MCF 10A (cell line): ENCODE measurements at regions of chr1 and their contacts with region 1.

Region 1: DNA sequence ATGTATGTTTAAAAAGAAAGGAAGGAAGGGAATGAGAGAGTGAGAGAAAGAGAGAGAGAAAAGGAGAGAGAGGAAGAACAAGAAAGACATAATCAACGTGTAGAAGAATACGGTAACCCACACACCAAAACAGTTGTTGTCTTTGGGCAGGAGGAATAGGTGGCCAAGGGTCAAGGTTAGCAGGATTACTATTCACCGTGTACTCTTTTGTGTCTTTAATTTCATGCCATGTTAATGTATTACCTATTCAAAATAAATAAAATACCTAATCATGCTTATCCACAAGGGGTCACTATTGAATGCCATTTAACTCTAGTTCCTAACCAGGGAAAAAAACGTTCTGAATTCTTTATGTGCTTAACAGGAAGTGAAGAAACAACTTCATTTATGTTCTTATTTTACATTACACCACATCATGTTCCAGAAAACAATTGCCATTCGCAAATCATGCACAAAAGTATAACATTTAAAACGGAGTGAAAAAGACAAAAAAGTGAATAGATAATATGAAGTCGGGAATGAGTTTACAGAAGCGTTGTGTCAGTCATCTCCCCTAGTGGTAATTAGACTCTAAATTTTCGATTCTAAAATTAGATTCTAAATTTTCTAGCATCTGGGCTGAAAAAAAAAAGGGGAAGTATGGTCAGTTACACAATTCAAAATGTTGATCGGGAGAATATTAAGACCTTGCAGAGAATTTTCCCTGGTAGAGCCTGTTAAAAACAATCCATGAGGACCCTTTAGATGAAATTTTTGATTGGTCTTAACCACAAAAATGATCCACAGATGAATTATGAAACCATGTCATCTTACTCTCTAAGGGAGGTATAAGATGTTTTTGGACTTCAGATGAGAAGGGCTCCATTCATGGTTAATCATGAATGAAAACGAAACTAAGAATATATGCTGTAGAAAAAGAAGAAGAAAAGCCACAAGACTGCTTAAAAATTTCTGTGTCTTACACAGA is 700 bp upstream of the KMO start:
- DNase-seq: peak; percentile 91
- H3K4me3 Mint-ChIP-seq: peak overlapping the region; percentile 74
- H3K27ac Mint-ChIP-seq: peak overlapping the region; percentile 80
- H3K4me1 Mint-ChIP-seq: peaks cover 21% of the 10 kb centered on the region
- H3K27me3 Mint-ChIP-seq: no peaks in the 10 kb centered on the region
- CTCF ChIP-seq: peak; percentile 77

Region 2: DNA sequence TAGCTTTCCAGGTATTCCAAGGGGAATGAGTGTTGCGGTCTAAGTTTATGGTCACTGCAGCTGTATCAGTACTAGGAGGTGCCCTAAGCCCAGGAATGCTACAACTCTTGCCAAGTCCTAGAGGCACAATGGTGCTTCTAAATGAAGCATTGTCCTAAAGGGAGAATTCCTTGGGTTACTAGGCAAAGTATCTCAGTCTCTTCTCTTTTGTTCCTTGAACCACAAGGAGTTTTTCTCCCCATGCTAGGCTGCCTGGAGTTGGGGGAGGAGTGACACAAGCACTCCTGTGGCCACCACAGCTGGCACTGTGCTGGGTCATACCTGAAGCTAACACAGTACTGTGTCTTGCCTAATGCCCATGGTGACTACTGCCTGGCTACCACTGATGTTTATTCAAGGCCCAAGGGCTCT is 51.4 kb after region 1 on chr1:
- CTCF ChIA-PET with region 1: interaction called, 3 read pairs
- POLR2A ChIA-PET with region 1: interaction called, 10 read pairs
- intact Hi-C with region 1: no loop called
- DNase-seq: peak; percentile 75
- H3K4me3 Mint-ChIP-seq: no peak overlapping the region
- H3K27ac Mint-ChIP-seq: peak overlapping the region; percentile 73
- H3K4me1 Mint-ChIP-seq: peaks cover 8% of the 10 kb centered on the region
- H3K27me3 Mint-ChIP-seq: no peaks in the 10 kb centered on the region
- CTCF ChIP-seq: no peak

Region 3: DNA sequence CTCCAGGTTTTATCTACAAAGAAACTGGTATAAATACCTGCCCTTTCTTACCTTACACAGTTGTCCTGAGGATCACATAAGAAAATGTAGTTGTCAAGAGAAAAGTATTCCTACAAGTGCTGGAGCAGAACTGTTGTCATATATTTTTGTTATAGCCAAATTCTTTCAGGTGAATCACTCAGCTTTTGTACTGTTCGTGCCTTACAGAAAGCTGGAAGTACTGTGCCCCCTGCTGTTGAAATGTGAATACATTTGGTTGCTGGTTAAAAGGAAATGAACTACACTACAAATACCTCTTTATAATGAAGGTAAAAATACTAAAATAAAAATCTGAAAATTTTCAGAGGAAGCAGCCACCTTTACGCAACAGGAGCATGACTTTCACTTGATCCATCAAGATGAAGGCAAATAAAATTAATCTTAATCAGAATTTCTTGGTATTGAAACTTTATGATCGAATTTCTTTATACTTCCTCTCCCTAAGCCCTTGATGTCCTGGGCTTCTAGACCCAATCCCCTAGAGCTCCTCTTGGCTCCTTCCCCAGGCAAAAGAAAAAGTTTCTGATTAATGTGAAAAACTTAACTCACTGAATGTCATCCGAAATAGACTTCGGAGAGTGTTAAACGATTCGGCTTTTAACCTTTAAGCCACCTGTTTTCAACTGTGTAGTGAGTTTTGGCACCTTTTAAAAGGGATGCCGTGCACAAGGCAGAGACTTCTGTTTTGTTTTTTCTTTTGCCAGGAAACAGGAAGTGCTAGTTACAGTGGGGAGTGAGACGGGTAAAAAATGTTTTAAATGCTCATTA is 96.2 kb after region 1 on chr1:
- CTCF ChIA-PET with region 1: interaction called, 22 read pairs
- POLR2A ChIA-PET with region 1: interaction called, 14 read pairs
- intact Hi-C with region 1: loop called (anchors 1 kb)
- DNase-seq: peak; percentile 92
- H3K4me3 Mint-ChIP-seq: no peak overlapping the region
- H3K27ac Mint-ChIP-seq: peak overlapping the region; percentile 52
- H3K4me1 Mint-ChIP-seq: peaks cover 58% of the 10 kb centered on the region
- H3K27me3 Mint-ChIP-seq: no peaks in the 10 kb centered on the region
- CTCF ChIP-seq: peak; percentile 80

Region 4: DNA sequence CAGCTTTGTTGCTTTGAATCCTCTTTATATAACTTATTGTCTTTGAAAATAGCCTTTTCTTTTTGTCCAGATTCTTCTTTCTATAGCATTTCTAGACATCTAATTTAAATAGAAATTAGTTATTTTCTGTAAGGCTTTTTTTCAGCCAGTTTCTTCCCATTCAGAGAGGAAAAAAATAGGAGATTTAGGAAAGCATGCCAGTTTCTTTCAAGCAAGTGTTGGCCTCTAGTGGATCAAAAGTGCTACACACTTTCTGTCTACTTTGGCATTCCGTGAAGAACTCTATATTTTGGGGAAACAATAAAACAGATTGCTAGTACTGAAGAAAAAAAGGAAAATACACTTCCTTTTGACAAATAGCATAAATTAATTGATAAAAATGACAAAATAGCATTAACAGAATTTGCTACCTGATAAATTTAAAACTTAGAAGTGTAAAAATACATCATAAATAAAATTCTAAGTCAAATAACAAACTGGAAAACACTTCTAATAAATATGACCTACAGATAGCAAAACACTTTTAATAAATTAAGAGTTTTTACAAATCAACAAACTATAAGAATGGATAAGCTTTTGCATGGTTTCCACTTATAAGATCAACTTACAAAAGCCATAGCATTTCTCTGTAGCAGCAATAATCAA is 303.4 kb after region 1 on chr1:
- CTCF ChIA-PET with region 1: interaction called, 10 read pairs
- POLR2A ChIA-PET with region 1: interaction called, 7 read pairs
- intact Hi-C with region 1: loop called (anchors 1 kb)
- DNase-seq: peak; percentile 75
- H3K4me3 Mint-ChIP-seq: no peak overlapping the region
- H3K27ac Mint-ChIP-seq: peak overlapping the region; percentile 36
- H3K4me1 Mint-ChIP-seq: peaks cover 22% of the 10 kb centered on the region
- H3K27me3 Mint-ChIP-seq: no peaks in the 10 kb centered on the region
- CTCF ChIP-seq: peak; percentile 98

Region 5: GRCh38 chr1:241870290-241870689 is 338.8 kb after region 1 on chr1:
- CTCF ChIA-PET with region 1: no interaction called
- POLR2A ChIA-PET with region 1: no interaction called
- intact Hi-C with region 1: no loop called
- DNase-seq: no peak
- H3K4me3 Mint-ChIP-seq: no peak overlapping the region
- H3K27ac Mint-ChIP-seq: peak overlapping the region; percentile 38
- H3K4me1 Mint-ChIP-seq: no peaks in the 10 kb centered on the region
- H3K27me3 Mint-ChIP-seq: no peaks in the 10 kb centered on the region
- CTCF ChIP-seq: no peak

Region 6: DNA sequence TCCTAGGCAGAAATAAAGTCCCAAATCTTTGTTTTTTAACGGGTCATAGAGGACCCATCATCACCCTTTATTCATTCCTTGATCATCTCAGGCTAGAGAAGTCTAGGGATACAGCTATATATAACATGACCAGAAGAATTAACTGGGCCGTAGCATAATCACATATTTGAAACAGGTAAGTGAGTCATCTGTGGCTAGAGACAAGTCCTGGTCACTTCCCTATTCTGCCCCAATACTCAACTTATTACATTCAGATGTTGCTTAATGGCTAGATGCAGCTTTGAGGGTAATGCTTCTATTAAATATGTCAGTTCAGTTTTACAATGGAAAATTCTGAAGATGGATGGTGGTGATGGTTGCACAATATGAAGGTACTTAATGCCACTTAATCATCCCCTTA is 363.5 kb after region 1 on chr1:
- CTCF ChIA-PET with region 1: no interaction called
- POLR2A ChIA-PET with region 1: no interaction called
- intact Hi-C with region 1: loop called (anchors 1 kb)
- DNase-seq: no peak
- H3K4me3 Mint-ChIP-seq: no peak overlapping the region
- H3K27ac Mint-ChIP-seq: no peak overlapping the region
- H3K4me1 Mint-ChIP-seq: no peaks in the 10 kb centered on the region
- H3K27me3 Mint-ChIP-seq: no peaks in the 10 kb centered on the region
- CTCF ChIP-seq: no peak

Region 7: DNA sequence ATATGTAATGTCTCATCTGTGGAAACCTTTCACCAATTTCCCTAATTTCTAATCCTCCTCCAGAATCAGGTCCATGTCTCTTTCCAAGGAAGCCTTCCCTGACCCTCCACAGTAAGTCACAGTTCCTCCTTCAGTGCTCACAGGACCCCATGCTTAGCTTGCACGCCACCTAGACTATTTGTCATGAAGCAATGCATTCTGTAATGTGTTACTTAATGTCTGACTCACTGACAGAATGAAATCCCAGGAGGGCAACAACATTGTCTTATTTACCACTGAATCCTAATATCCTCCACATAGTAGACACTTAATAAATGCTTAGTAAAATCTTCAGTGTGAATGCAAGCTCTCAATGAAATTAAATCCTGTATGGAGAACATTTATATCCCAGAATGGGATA is 1238.9 kb after region 1 on chr1:
- CTCF ChIA-PET with region 1: no interaction called
- POLR2A ChIA-PET with region 1: no interaction called
- intact Hi-C with region 1: no loop called
- DNase-seq: peak; percentile 78
- H3K4me3 Mint-ChIP-seq: no peak overlapping the region
- H3K27ac Mint-ChIP-seq: no peak overlapping the region
- H3K4me1 Mint-ChIP-seq: peaks cover 5% of the 10 kb centered on the region
- H3K27me3 Mint-ChIP-seq: no peaks in the 10 kb centered on the region
- CTCF ChIP-seq: no peak